Cardiac septum (tissue), 1 donor: ENCODE measurements at regions of chr11 and their contacts with region 1.

Region 1: GRCh38 chr11:76380967-76381719 is at the starts of genes GVQW3 and THAP12:
- DNase-seq: peak; percentile 99
- total RNA-seq, gene GVQW3: 0.97 TPM
- total RNA-seq, gene THAP12: 25.8 TPM

Region 2: GRCh38 chr11:75964071-75964470 is 417.1 kb before region 1 on chr11:
- intact Hi-C with region 1: no loop called
- DNase-seq: no peak

Region 3: GRCh38 chr11:76235233-76236091 is 145.7 kb before region 1 on chr11:
- intact Hi-C with region 1: loop called (anchors 5 kb)
- DNase-seq: peak; percentile 91

Region 4: DNA sequence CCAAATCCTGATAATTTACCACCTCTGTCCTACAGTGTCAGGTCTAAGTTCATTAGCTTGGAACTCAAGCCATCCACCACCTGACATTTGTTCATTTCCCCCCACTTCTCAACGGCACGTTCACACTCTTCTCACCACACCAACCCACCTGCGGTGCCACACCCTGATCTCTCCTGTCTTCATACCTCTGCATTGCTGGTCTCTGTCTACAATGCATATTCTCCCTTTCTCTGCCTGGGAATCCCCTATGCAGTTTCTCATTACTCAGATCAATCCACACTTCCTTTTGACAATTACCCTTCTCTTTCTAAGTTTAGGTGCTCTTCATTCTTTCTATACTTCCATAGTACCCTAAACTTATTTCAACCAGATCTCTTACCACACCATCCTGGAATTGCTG is 43.2 kb after region 1 on chr11:
- intact Hi-C with region 1: no loop called
- DNase-seq: no peak

Region 5: GRCh38 chr11:76444384-76445123 is 63.4 kb after region 1 on chr11 and contains the start of gene EMSY:
- intact Hi-C with region 1: loop called (anchors 1 kb)
- DNase-seq: peak; percentile 99
- total RNA-seq, gene EMSY: 17.0 TPM